GM12878 (cell line): ENCODE measurements at regions of chr2 and their contacts with region 1.

Region 1: GRCh38 chr2:42859006-42859552 is 66.7 kb upstream of the HAAO start:
- DNase-seq: peak; percentile 52
- ATAC-seq: peak; percentile 70
- H3K4me3 ChIP-seq: no peak overlapping the region
- H3K27ac ChIP-seq: no peak overlapping the region
- H3K4me1 ChIP-seq: no peaks in the 10 kb centered on the region
- H3K27me3 ChIP-seq: peaks cover 0 to 2% of the 10 kb centered on the region in 2 experiments; a peak in 1 of 4 replicates
- CTCF ChIP-seq: peak; percentile 68 to 90 (median 86)
- EP300 ChIP-seq: no peak
- POLR2A ChIP-seq: no peak
- RAD21 ChIP-seq: peak; percentile 94

Region 2: DNA sequence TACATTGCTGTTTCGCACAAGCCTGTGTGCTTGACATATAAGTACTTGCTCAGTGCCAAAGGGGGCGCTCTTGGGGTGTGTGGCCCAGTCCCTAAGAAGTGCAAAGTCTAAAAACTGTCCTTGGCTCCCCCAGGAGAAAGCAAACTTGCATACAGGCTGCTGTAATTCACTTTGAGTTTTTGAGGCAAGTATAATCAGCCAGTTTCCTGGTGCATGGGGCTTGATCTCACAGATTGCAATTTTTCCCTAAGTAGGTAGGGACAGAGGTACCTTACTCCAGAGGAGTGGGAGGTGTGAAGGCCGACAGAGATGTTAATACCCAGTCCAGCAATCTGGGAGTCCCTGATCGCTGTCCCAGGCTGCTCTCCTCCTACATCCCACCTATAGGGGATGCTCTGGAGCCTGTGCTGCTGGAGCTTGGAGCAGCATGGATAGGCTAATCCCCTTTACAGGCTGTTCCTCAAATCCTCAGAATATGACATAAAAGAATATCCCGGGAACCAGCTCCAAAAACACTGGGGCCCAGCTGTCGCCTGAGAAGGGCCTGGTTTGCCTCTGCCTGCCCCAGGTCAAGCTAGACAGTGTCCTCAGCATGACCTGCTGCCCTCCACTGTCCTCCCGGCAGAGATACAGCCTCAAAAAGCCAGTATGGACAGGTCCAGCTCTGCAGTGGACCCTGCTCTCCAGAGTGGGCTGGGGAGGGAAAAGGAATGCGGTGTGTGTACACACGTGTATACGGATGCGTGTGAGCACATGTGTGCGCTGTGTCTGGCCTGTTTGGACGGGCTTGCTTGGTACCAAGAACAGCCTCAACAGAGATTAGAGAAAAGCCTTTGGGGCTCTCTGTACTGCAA is 69.8 kb after region 1 on chr2:
- CTCF ChIA-PET with region 1: interaction called, 18 read pairs
- POLR2A ChIA-PET with region 1: no interaction called
- RAD21 ChIA-PET with region 1: interaction called, 5 read pairs
- SMC1A ChIA-PET with region 1: interaction called, 7 read pairs
- in situ Hi-C with region 1: no loop called
- intact Hi-C with region 1: no loop called
- DNase-seq: no peak
- ATAC-seq: peak; percentile 43
- H3K4me3 ChIP-seq: no peak overlapping the region
- H3K27ac ChIP-seq: no peak overlapping the region
- H3K4me1 ChIP-seq: no peaks in the 10 kb centered on the region
- H3K27me3 ChIP-seq: no peaks in the 10 kb centered on the region
- CTCF ChIP-seq: peak; percentile 10 to 32 (median 28); a peak in 3 of 6 replicates
- EP300 ChIP-seq: no peak
- POLR2A ChIP-seq: no peak
- RAD21 ChIP-seq: no peak

Region 3: DNA sequence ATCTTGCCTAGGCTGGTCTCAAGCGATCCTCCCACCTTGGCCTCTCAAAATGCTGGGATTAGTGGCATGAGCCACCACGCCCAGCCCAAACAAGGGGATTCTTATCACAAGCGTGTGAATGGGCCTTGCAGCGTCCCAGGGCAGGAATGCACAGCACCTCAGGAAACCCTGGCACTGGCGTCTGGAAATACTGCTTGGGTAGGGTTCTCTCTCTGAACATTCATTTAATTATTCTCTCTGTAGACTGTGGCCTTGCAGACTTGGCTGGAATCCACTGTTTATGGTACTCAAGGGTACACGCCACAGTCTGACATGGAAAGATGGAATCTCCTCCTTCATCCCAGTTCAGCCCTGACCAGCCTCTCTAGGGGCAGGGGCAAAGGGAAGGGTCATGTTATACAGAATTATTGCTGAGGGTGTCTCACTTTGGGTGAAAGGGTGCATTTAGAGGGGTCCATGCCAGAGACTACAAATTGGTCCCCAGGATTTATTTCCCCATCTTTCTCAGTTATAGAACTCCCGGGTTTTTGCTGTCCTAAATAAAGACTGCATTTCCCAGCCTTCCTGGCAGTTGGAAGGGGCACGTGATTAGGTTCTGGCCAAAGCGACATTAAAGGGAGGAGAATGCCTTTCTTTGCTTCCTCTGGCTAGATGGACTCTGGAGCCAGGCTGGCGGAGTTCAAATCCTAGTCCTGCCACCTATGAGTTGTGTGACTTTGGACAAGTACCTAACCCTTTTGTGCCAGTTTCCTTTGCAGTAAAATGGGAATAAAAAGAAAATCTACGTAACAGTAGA is 80.5 kb after region 1 on chr2:
- CTCF ChIA-PET with region 1: interaction called, 51 read pairs
- POLR2A ChIA-PET with region 1: no interaction called
- RAD21 ChIA-PET with region 1: interaction called, 5 read pairs
- SMC1A ChIA-PET with region 1: interaction called, 12 read pairs
- in situ Hi-C with region 1: no loop called
- intact Hi-C with region 1: no loop called
- DNase-seq: no peak
- ATAC-seq: no peak
- H3K4me3 ChIP-seq: no peak overlapping the region
- H3K27ac ChIP-seq: no peak overlapping the region
- H3K4me1 ChIP-seq: no peaks in the 10 kb centered on the region; the same call in 1 of the 2 replicates
- H3K27me3 ChIP-seq: no peaks in the 10 kb centered on the region
- CTCF ChIP-seq: no peak
- EP300 ChIP-seq: no peak
- POLR2A ChIP-seq: no peak
- RAD21 ChIP-seq: no peak

Region 4: DNA sequence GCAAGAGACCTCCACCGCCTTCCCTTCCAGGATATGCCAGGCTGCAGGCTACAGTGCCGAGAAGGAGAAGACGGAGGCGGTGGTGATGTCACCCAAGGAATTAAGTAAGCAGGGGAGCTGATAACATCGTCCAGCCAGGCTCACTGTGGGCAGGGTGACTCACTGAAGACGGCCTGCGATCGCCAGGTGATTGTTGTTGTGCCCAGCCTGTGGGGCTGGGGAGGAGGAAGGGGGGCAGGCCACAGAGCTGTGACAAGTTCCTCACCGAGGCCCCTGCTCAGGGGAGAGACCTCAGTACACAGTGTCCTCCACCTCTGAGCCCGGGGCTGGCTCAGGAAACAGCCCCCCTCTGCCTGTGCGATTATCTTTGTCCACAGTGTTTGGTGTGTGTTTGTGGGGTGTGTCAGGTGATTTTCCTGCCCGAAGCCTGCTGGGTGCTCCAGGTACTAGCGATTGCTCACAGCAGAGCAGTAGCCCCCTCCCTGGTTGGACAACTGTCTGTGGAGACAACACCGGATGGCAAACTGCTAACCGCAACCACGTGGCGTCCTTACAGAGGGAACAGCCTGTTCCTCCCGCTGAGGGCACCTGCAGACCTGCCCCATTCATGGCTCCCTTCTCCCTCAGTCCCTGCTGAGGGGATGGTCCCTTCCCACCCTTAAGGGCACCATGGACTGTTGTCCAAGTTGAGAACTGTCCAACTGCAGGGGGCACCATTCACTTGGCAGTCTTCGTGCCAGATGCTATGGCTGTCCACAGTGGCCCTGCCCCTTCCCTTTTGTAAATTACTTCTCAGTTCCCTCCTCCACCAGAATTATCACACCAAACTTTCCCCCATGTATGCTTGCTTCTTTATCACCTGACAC is 272.2 kb after region 1 on chr2:
- CTCF ChIA-PET with region 1: interaction called, 3 read pairs
- POLR2A ChIA-PET with region 1: no interaction called
- RAD21 ChIA-PET with region 1: interaction called, 6 read pairs
- SMC1A ChIA-PET with region 1: no interaction called
- in situ Hi-C with region 1: no loop called
- intact Hi-C with region 1: loop called (anchors 10 kb)
- DNase-seq: no peak
- ATAC-seq: peak; percentile 81
- H3K4me3 ChIP-seq: no peak overlapping the region
- H3K27ac ChIP-seq: no peak overlapping the region
- H3K4me1 ChIP-seq: peaks cover 43% of the 10 kb centered on the region
- H3K27me3 ChIP-seq: no peaks in the 10 kb centered on the region
- CTCF ChIP-seq: peak; percentile 61 to 82 (median 62); a peak in 5 of 6 replicates
- EP300 ChIP-seq: no peak; a peak in 1 of 4 replicates
- POLR2A ChIP-seq: no peak
- RAD21 ChIP-seq: peak; percentile 78